Esophagus muscularis mucosa (tissue), 4 donors: ENCODE measurements at regions of chr9 and their contacts with region 1.

Region 1: GRCh38 chr9:125241000-125241862 is at the start of gene HSPA5:
- DNase-seq: peak; percentile 100
- H3K4me3 ChIP-seq: peak within 1 kb of the TSS; percentile 84 to 86 (median 85)
- H3K27ac ChIP-seq: peak within 1 kb of the TSS; percentile 95 to 96 (median 95)
- H3K4me1 ChIP-seq: peaks cover 42 to 50% (median 48%) of the 10 kb centered on the region in 4 donors
- H3K27me3 ChIP-seq: no peaks in the 10 kb centered on the region
- CTCF ChIP-seq: peak in 2 of 3 experiments; percentile 12 to 20
- EP300 ChIP-seq: no peak
- POLR2A ChIP-seq: peak; percentile 93
- total RNA-seq, gene HSPA5: 57.7 to 88.3 (median 68.7) TPM

Region 2: GRCh38 chr9:125008599-125008998 is 232.6 kb before region 1 on chr9:
- intact Hi-C with region 1: no loop called
- DNase-seq: no peak
- H3K4me3 ChIP-seq: no peak overlapping the region
- H3K27ac ChIP-seq: no peak overlapping the region
- H3K4me1 ChIP-seq: no peaks in the 10 kb centered on the region
- H3K27me3 ChIP-seq: no peaks in the 10 kb centered on the region
- CTCF ChIP-seq: no peak
- EP300 ChIP-seq: no peak
- POLR2A ChIP-seq: no peak

Region 3: GRCh38 chr9:125200210-125201047 is 40.8 kb before region 1 on chr9 and contains the start of gene RABEPK:
- intact Hi-C with region 1: loop called (anchors 2 kb)
- DNase-seq: peak; percentile 96
- H3K4me3 ChIP-seq: peak within 1 kb of the TSS; percentile 68 to 84 (median 78)
- H3K27ac ChIP-seq: peak within 1 kb of the TSS; percentile 90 to 96 (median 93)
- H3K4me1 ChIP-seq: peaks cover 13 to 31% (median 16%) of the 10 kb centered on the region in 4 donors
- H3K27me3 ChIP-seq: no peaks in the 10 kb centered on the region
- CTCF ChIP-seq: no peak
- EP300 ChIP-seq: no peak
- POLR2A ChIP-seq: peak; percentile 72
- total RNA-seq, gene RABEPK: 11.2 to 21.6 (median 13.7) TPM

Region 4: DNA sequence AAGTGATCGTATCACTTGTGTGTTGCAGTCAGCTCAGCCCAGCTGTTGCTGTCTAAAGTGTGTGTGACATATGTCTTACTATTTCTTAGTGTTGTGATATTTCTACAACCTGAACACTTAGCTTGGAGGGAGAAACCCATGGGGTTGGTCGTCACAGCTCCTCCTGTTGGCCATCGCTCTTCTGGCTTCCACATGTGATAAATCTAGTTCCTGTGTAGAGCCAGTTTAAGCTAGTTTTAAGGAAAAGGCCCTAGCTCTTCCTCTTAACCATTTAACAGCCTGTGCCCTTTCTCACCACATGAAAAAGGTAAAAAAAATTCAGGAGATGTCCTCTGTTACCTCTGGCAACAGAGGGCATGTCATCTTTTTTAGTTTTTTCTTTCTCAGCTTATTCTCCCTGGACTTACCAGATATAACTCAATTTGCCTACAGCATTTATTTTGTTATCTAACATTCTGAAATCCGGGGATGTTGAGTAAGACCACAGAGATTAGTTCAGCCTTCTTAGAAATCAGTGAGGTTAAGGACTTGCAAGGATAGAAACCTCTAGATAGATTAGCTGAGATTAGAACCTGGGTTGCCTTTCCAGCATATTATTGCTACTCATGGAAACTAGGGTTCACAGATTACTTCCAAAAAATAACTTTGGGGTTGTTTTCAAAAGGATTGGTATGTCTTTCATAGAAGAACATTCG is 120.8 kb after region 1 on chr9:
- intact Hi-C with region 1: loop called (anchors 10 kb)
- DNase-seq: no peak
- H3K4me3 ChIP-seq: no peak overlapping the region
- H3K27ac ChIP-seq: no peak overlapping the region
- H3K4me1 ChIP-seq: no peaks in the 10 kb centered on the region
- H3K27me3 ChIP-seq: no peaks in the 10 kb centered on the region
- CTCF ChIP-seq: peak in 1 of 3 experiments; percentile 4
- EP300 ChIP-seq: no peak
- POLR2A ChIP-seq: no peak